ENCODE measurements at regions of chr7 and their contacts with region 1.

Region 1: GRCh38 chr7:1579481-1580421 is 9.9 kb upstream of the PSMG3 start:
- DNase-seq: peak; percentile 80
- H3K4me3 Mint-ChIP-seq: no peak overlapping the region
- H3K27ac Mint-ChIP-seq: no peak overlapping the region
- H3K4me1 Mint-ChIP-seq: peaks cover 7% of the 10 kb centered on the region
- H3K27me3 Mint-ChIP-seq: no peaks in the 10 kb centered on the region

Region 2: DNA sequence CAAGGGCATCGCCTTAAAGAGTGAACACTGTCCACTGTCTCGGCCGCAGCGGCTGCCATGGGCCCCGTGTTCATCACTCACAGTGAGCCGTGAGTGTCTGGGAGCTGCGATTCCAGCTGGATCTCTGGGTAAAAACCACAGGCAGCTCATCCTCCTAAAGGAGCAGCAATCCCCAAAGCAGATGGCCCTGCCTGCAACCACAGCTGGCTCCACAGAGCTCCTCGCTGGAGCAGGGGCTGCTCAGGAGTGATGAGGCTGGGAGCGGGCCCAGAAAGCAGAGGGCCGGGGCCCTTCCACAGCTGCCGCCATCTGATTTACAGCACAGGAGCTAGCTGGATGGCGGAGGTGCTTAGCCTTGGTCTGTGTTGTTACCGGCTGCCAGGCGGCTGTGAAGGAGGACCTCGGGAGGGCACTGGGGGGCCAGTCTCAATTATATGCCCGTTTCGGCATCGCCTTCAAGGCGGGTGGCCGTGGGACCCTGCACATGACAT is 17.1 kb before region 1 on chr7:
- CTCF ChIA-PET with region 1: no interaction called
- POLR2A ChIA-PET with region 1: no interaction called
- intact Hi-C with region 1: no loop called
- DNase-seq: no peak
- H3K4me3 Mint-ChIP-seq: no peak overlapping the region
- H3K27ac Mint-ChIP-seq: no peak overlapping the region
- H3K4me1 Mint-ChIP-seq: peaks cover 5% of the 10 kb centered on the region
- H3K27me3 Mint-ChIP-seq: no peaks in the 10 kb centered on the region

Region 3: GRCh38 chr7:1664711-1665548 is 85.2 kb after region 1 on chr7:
- CTCF ChIA-PET with region 1: no interaction called
- POLR2A ChIA-PET with region 1: no interaction called
- intact Hi-C with region 1: loop called (anchors 5 kb)
- DNase-seq: peak; percentile 66
- H3K4me3 Mint-ChIP-seq: no peak overlapping the region
- H3K27ac Mint-ChIP-seq: no peak overlapping the region
- H3K4me1 Mint-ChIP-seq: peaks cover 5% of the 10 kb centered on the region
- H3K27me3 Mint-ChIP-seq: peaks cover 42% of the 10 kb centered on the region

Measured in activated CD4-positive, alpha-beta memory T cell treated with anti-CD3 and anti-CD28 coated beads for 36 hours (primary cell).